ENCODE measurements at regions of chr5 and their contacts with region 1.

Region 1: GRCh38 chr5:72523960-72524582 is 16.9 kb upstream of the ZNF366 start:
- DNase-seq: peak; percentile 51
- CTCF ChIP-seq: peak; percentile 58

Region 2: GRCh38 chr5:72268753-72269410 is 255.2 kb before region 1 on chr5:
- CTCF ChIA-PET with region 1: no interaction called
- POLR2A ChIA-PET with region 1: no interaction called
- DNase-seq: peak; percentile 38
- CTCF ChIP-seq: peak; percentile 57

Region 3: GRCh38 chr5:72372923-72373322 is 151.1 kb before region 1 on chr5:
- CTCF ChIA-PET with region 1: interaction called, 154 read pairs
- POLR2A ChIA-PET with region 1: no interaction called
- DNase-seq: no peak
- CTCF ChIP-seq: no peak

Region 4: GRCh38 chr5:72412283-72413055 is 111.6 kb before region 1 on chr5:
- CTCF ChIA-PET with region 1: interaction called, 13 read pairs
- POLR2A ChIA-PET with region 1: no interaction called
- DNase-seq: no peak
- CTCF ChIP-seq: no peak

Region 5: GRCh38 chr5:72486371-72486770 is 37.7 kb before region 1 on chr5:
- CTCF ChIA-PET with region 1: interaction called, 28 read pairs
- POLR2A ChIA-PET with region 1: no interaction called
- DNase-seq: no peak
- CTCF ChIP-seq: no peak

Region 6: DNA sequence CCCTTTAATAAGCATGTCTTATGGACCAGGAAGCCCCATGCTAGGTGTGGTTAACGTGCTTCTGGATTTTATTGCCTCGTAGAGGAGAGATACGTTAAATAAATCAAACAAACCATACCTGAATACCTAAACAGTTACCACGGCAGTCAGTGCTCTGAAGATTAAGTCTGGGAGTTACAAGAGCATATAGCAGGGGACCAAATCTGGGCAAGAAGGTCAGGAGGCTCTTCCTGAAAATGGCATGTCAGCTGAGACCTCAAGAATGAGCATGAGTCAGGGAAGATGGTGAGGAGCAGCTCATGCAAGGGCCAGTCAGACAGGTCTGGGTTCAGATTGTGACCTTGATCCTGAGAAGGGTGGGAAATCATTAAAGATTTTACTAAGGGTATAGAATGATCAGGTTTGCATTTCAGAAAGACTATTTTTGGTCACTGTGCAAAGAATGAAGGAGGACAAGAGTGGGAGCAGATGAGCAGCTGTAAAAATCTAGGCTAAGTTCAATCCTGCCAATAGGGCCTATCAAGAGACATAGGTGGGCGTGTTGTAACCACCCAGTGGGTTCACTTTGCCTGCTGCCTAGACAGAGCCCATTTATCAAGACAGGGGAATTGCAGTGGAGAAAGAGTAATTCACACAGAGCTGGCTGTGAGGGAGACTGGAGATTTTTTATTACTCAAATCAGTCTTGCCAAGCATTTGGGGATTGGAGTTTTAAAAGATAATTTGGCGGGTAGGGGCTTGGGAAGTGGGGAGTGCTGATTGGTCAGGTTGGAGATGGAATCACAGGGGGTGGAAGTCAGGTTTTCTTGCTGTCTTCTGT is 12.1 kb before region 1 on chr5:
- CTCF ChIA-PET with region 1: interaction called, 21 read pairs
- POLR2A ChIA-PET with region 1: no interaction called
- DNase-seq: no peak
- CTCF ChIP-seq: no peak

Region 7: DNA sequence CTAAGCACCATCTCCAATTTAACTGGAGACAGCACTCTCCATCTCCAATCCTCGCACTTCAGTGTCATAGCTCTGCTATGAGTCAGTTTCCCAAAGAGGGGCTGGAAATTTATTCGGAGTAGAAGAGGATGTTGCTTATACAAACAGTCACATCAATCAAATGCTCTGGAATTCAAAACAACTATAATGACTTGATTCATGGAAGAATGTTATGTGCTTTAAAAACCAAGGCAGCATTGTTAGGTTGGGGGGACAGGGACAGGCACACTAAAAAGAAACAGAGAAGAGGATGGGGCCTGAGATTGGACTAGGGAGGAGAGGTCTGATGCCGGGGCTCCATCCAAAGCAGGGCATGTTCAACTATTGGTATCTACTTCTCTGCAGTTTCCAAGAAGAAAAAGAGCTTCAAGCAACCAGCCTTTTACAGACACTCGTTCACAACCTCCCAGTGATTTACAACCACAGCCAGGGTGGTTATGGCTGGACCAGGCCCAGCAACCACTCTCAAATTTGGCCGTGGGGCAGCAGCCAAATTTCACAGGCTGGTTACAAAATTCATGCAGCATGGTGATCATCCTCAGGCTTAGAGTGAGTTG is 100.7 kb after region 1 on chr5:
- CTCF ChIA-PET with region 1: no interaction called
- POLR2A ChIA-PET with region 1: no interaction called
- DNase-seq: no peak
- CTCF ChIP-seq: no peak